B cell (primary cell): ENCODE measurements at regions of chr2 and their contacts with region 1.

Region 1: DNA sequence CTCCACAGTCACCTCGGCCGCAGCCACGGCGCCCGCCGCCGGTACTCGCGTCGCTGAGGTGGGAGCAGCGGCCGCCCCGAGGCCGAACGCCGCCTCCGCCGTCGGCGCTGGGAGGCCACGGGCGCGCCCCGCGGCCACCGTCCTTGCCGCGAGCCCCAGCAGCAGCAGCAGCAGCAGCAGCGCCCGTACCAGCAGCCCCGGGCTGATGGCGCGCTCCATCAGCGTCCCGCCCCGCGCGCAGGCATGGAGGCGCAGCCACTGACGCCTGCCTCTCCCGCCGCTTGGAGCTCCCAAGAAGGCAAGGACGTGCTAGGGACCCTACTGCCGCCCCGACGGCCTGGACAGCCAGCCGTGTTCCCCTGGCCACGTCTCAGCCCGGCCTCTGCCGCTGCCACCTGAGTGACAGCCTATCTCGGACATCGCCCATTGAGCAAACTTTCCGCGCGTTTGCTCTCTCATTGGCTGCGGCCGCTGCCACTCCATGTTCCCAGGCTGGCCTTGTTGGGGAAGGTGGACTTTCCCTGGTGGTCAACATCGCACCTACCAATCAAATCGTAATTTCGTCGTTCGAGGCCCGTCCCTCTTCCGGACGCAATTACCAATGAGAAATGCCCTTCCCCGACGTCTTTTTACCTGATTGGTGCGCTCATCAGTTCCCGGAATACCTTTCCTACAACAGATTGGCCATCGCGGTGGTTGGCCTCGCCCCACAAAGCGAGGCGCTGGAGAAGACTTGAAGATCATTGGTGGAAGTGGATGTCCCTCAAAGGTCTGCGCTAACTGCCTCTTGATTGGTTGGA is at the start of gene EIF2AK3:
- DNase-seq: peak; percentile 100
- ATAC-seq: peak; percentile 83
- H3K4me3 ChIP-seq: peak within 1 kb of the TSS; percentile 75 to 95 (median 88)
- H3K4me3 Mint-ChIP-seq: peak within 1 kb of the TSS; percentile 96
- H3K27ac ChIP-seq: peak within 1 kb of the TSS; percentile 99
- H3K27ac Mint-ChIP-seq: peak within 1 kb of the TSS; percentile 96
- H3K4me1 ChIP-seq: peaks cover 43 to 50% of the 10 kb centered on the region in 2 donors
- H3K4me1 Mint-ChIP-seq: peaks cover 20% of the 10 kb centered on the region
- H3K27me3 ChIP-seq: no peaks in the 10 kb centered on the region
- H3K27me3 Mint-ChIP-seq: no peaks in the 10 kb centered on the region
- CTCF ChIP-seq: no peak
- total RNA-seq, gene EIF2AK3: 57.9 and 67.5 TPM in 2 replicates

Region 2: DNA sequence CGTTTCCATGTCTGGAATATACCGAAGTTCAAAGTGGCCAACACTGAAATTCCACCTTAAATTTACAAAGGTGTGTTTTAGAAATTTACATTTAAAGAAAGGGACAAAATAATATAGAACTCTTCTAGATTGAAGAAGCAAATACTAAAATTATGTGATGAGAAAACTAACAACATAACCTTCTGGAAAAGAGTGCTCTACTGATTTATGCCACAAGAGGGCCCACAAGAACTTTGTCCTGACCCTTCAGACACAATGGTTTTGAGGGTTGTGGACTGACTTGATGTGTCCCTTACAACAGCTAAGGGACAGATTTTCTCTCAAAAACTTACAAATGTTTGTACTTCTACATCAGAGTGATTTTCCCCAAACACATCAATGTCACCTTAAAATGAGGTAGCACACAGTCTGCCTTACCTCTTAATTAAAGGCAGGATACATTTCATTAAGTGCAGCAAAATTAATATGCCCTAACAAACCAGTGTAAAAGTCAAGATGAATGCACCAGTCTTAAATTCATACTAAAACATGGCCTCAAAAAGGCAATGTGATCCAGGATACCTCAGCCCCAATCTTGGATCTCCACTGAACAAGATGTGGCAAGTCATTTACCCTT is 36.1 kb before region 1 on chr2:
- CTCF ChIA-PET with region 1: interaction called, 11 read pairs
- POLR2A ChIA-PET with region 1: interaction called, 14 read pairs
- intact Hi-C with region 1: loop called (anchors 1 kb)
- DNase-seq: peak; percentile 81
- ATAC-seq: peak; percentile 95
- H3K4me3 ChIP-seq: no peak overlapping the region
- H3K4me3 Mint-ChIP-seq: no peak overlapping the region
- H3K27ac ChIP-seq: peak overlapping the region in 1 of 2 donors; percentile 45
- H3K27ac Mint-ChIP-seq: peak overlapping the region; percentile 87
- H3K4me1 ChIP-seq: peaks cover 11 to 14% of the 10 kb centered on the region in 2 donors
- H3K4me1 Mint-ChIP-seq: peaks cover 25% of the 10 kb centered on the region
- H3K27me3 ChIP-seq: no peaks in the 10 kb centered on the region
- H3K27me3 Mint-ChIP-seq: no peaks in the 10 kb centered on the region
- CTCF ChIP-seq: peak; percentile 80

Region 3: DNA sequence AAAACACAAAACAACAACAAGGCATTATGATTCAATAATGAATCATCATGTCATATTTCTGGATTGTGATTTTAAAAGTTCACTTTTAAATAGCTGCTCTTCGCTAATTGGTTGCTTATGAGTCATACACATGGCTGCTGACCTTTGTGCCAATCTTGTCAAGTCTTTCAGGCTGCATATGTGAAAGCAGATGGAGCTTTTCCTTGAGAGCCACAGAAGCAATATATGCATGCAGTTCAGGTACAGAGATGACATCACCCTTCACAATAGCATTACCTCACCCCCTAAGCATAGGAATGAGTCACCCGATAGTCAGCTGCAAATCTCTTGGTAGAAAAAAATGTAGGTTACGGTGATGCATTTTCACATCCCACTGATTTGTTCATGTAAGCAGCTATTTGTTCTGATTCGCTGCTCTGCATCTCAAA is 27.2 kb before region 1 on chr2:
- CTCF ChIA-PET with region 1: interaction called, 6 read pairs
- POLR2A ChIA-PET with region 1: interaction called, 25 read pairs
- intact Hi-C with region 1: loop called (anchors 1 kb)
- DNase-seq: peak; percentile 94
- ATAC-seq: peak; percentile 93
- H3K4me3 ChIP-seq: peak overlapping the region in 2 of 5 experiments; percentile 19 to 55
- H3K4me3 Mint-ChIP-seq: peak overlapping the region; percentile 71
- H3K27ac ChIP-seq: peak overlapping the region; percentile 94 to 96
- H3K27ac Mint-ChIP-seq: peak overlapping the region; percentile 92
- H3K4me1 ChIP-seq: peaks cover 76 to 88% of the 10 kb centered on the region in 2 donors
- H3K4me1 Mint-ChIP-seq: peaks cover 82% of the 10 kb centered on the region
- H3K27me3 ChIP-seq: no peaks in the 10 kb centered on the region
- H3K27me3 Mint-ChIP-seq: no peaks in the 10 kb centered on the region
- CTCF ChIP-seq: no peak

Region 4: DNA sequence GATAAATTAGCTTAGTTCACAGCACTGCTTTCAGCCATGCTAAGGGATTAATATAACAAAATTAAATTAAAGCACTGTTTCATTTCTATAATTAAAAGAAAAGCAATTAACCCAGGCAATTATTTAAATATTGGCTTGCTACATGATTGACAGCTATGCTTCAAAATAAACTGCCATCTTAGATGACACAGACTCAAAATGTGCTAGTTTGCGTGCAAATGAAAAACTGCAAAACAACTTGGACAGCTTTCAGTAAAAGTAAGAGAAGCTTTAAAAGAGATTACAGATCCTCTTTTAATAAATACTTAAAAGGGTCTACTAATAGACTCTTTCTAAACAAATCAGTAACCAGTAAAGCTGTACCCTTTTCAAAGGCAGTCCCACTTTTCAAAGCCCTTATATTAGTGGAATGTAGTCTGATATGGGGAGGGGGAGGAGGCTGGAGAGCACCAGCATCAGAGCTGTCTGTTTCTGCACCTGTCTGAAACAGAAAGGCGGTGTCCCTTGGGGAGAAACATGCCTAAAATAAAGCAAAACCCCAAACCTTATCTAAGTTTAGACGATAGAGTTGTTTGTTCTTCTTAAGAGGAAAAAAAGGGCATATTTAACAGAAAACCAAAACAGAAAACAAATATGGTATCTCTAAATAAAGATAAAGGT is 20.8 kb before region 1 on chr2:
- CTCF ChIA-PET with region 1: interaction called, 6 read pairs
- POLR2A ChIA-PET with region 1: interaction called, 25 read pairs
- intact Hi-C with region 1: loop called (anchors 1 kb)
- DNase-seq: peak; percentile 72
- ATAC-seq: peak; percentile 93
- H3K4me3 ChIP-seq: peak overlapping the region in 2 of 5 experiments; percentile 1 to 28
- H3K4me3 Mint-ChIP-seq: peak overlapping the region; percentile 57
- H3K27ac ChIP-seq: peak overlapping the region; percentile 86 to 94
- H3K27ac Mint-ChIP-seq: peak overlapping the region; percentile 94
- H3K4me1 ChIP-seq: peaks cover 78 to 89% of the 10 kb centered on the region in 2 donors
- H3K4me1 Mint-ChIP-seq: peaks cover 76% of the 10 kb centered on the region
- H3K27me3 ChIP-seq: no peaks in the 10 kb centered on the region
- H3K27me3 Mint-ChIP-seq: no peaks in the 10 kb centered on the region
- CTCF ChIP-seq: no peak

Region 5: DNA sequence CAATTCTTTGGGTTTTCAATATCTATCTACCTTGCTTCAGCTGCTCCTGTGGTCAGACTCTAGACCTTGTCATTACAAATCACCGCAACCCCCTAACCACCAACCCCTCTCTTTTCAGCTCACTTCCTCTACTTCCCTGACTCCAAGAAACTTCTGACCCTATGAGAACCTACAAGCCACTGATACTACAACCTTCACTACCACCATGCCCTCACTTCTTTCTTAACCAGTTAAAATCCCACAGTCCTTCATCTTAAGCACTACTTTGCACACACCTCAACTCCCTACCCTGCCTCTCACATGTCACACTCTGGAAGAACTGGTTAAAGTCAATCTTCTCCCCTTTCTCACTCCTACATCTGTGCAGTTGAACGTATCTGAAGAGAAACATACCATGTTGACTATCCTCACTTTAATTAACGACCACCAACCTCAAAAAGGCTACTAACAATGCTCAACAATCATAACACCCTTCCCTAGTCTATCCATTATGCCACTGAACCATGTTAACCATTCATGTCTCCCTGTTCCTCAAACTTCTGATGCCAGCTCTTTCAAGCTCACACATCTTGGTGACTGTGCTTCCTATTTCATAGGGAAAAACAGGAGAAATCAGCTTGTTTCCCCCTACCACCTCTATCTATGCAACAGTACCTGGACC is 12.6 kb before region 1 on chr2:
- CTCF ChIA-PET with region 1: interaction called, 4 read pairs
- POLR2A ChIA-PET with region 1: interaction called, 3 read pairs
- intact Hi-C with region 1: loop called (anchors 1 kb)
- DNase-seq: peak; percentile 41
- ATAC-seq: peak; percentile 31
- H3K4me3 ChIP-seq: peak overlapping the region in 1 of 5 experiments; percentile 29
- H3K4me3 Mint-ChIP-seq: no peak overlapping the region
- H3K27ac ChIP-seq: peak overlapping the region; percentile 61 to 84
- H3K27ac Mint-ChIP-seq: no peak overlapping the region
- H3K4me1 ChIP-seq: peaks cover 64 to 69% of the 10 kb centered on the region in 2 donors
- H3K4me1 Mint-ChIP-seq: peaks cover 51% of the 10 kb centered on the region
- H3K27me3 ChIP-seq: no peaks in the 10 kb centered on the region
- H3K27me3 Mint-ChIP-seq: no peaks in the 10 kb centered on the region
- CTCF ChIP-seq: no peak

Region 6: DNA sequence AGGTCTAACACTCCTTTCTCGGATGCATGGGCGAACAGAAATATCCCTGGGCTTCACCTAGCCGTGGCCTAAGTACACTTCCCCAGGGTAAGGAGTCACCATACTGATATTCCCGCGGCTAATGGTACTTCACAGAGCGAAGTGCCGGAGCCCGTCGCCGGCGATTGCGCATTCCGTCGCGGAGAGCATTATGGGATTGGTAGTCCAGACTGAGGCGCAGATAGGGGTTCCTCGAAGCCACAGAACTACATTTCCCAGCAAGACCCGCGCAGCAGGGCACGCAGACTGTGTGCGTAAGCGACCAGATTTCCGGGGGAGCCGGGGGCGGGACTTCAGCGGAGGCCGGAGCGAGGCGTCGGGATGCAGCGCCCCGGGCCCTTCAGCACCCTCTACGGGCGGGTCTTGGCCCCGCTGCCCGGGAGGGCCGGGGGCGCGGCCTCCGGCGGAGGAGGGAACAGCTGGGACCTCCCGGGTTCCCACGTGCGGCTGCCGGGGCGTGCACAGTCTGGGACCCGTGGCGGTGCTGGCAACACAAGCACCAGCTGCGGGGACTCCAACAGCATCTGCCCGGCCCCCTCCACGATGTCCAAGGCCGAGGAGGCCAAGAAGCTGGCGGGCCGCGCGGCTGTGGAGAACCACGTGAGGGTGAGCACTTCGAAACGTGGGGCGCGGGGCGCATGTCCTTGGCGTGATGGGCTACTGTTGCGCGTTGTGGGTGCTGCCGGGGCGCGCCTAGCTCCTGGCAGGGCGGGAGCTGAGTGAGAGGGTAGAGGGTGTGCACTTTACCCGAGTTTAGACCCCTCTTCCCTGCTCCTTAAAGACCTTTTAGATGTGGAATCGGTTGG is 64.3 kb after region 1 on chr2 and contains the start of gene RPIA:
- CTCF ChIA-PET with region 1: no interaction called
- POLR2A ChIA-PET with region 1: interaction called, 5 read pairs
- intact Hi-C with region 1: loop called (anchors 1 kb)
- DNase-seq: peak; percentile 99
- ATAC-seq: peak; percentile 91
- H3K4me3 ChIP-seq: peak within 1 kb of the TSS; percentile 85 to 99 (median 95)
- H3K4me3 Mint-ChIP-seq: peak within 1 kb of the TSS; percentile 98
- H3K27ac ChIP-seq: peak within 1 kb of the TSS; percentile 68 to 69
- H3K27ac Mint-ChIP-seq: peak within 1 kb of the TSS; percentile 90
- H3K4me1 ChIP-seq: peaks cover 23 to 27% of the 10 kb centered on the region in 2 donors
- H3K4me1 Mint-ChIP-seq: peaks cover 52% of the 10 kb centered on the region
- H3K27me3 ChIP-seq: no peaks in the 10 kb centered on the region
- H3K27me3 Mint-ChIP-seq: no peaks in the 10 kb centered on the region
- CTCF ChIP-seq: peak; percentile 66
- total RNA-seq, gene RPIA: 19.7 and 22.8 TPM in 2 replicates